Heart right ventricle (tissue), 16 donors: ENCODE measurements at regions of chr17 and their contacts with region 1.

Region 1: DNA sequence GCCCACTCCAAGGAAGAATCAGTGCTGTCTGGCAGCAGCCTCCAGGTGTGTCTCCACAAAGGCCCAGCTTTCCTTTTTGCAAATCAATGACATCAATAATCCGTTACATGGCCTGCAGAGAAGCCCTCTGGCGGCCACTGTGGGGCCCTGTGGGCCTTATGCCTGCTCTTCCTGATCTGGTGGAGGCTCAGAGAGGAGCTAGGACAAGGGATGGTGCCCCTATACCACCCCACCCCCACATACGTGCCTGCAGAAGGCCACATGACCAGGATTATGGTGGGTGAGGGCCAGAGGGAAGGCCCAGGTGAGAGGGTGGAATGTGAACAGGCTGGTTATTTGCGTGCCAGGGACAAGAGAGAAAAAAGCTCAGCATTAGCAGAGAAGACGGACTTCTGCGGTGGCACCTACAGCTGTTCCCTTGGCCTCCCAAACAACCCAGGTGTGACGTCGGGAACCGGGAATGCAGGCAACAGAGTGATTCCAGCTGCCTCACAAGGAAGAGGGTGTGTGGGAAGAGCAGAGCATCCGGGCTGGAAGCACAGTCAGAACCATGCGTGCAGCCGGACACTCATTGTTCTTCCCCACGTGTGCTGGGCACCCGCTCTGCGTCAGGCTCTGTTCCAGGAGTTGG is 22.5 kb downstream of the EIF4A3 start:
- DNase-seq: no peak
- ATAC-seq: peak in 3 of 8 donors; percentile 36 to 38 (median 37)
- H3K4me3 ChIP-seq: no peak overlapping the region
- H3K27ac ChIP-seq: no peak overlapping the region
- H3K4me1 ChIP-seq: no peaks in the 10 kb centered on the region
- H3K27me3 ChIP-seq: peaks cover 0 to 3% (median 0%) of the 10 kb centered on the region in 7 donors
- CTCF ChIP-seq: peak in 2 of 9 donors; percentile 7 to 27

Region 2: DNA sequence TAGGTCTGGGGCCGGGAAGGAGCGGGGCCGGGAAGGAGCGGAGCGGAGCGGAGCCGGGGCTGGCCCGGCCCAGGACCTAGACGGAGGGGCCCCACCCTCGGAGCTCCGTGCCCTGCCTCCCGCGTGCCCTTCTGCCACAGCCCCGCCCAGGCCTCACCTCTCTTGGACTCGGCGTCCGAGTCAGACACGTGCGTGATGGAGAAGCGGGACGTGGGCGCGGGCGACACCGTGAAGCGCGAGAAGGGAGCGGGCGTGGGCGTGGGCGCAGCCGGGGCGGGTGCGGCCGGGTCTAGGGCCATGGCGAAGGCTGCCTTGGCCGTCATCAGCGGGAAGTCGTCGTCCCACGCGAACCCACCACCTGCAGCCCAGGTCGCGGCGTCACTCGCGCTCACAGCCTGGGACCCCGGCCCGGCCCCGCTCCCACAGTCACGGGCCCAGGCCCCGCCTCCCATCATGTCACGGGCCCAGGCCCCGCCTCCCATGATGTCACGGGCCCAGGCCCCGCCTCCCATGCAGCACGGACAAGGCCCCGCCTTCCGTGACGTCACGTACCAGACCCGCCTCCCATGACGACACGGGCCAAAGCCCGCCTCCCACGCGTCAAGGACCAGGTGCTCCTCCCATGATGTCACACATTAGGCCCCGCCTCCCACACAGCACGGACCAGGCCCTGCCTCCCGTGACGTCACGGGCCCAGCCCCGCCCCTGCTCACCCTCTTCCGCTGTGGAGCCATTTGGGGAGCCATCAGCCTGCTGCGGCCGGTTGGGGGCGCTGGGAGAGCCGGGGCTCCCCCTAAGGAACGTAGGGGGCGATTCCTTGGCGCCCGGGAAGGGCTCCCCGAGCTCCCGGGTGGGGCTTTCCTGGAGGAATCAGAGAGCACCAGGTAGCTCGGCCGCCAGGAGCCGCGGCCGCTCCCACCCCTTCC is 995.0 kb after region 1 on chr17:
- intact Hi-C with region 1: loop called in 1 of 10 experiments (anchors 5 kb)
- DNase-seq: peak; percentile 61 to 71
- ATAC-seq: peak; percentile 14 to 65 (median 42)
- H3K4me3 ChIP-seq: peak overlapping the region in 8 of 10 donors; percentile 9 to 49 (median 30)
- H3K27ac ChIP-seq: no peak overlapping the region
- H3K4me1 ChIP-seq: peaks cover 0 to 21% (median 11%) of the 10 kb centered on the region in 9 donors
- H3K27me3 ChIP-seq: peaks cover 0 to 36% (median 14%) of the 10 kb centered on the region in 7 donors
- CTCF ChIP-seq: peak in 4 of 9 donors; percentile 17 to 24 (median 18)